Naive thymus-derived CD4-positive, alpha-beta T cell (primary cell): ENCODE measurements at regions of chr4 and their contacts with region 1.

Region 1: GRCh38 chr4:30815685-30816084 is 95.5 kb downstream of the PCDH7 start:
- DNase-seq: no peak
- ATAC-seq: no peak
- H3K4me3 ChIP-seq: no peak overlapping the region
- H3K4me3 Mint-ChIP-seq: no peak overlapping the region
- H3K27ac ChIP-seq: no peak overlapping the region
- H3K27ac Mint-ChIP-seq: no peak overlapping the region
- H3K4me1 ChIP-seq: no peaks in the 10 kb centered on the region
- H3K4me1 Mint-ChIP-seq: no peaks in the 10 kb centered on the region
- H3K27me3 ChIP-seq: no peaks in the 10 kb centered on the region
- H3K27me3 Mint-ChIP-seq: no peaks in the 10 kb centered on the region

Region 2: DNA sequence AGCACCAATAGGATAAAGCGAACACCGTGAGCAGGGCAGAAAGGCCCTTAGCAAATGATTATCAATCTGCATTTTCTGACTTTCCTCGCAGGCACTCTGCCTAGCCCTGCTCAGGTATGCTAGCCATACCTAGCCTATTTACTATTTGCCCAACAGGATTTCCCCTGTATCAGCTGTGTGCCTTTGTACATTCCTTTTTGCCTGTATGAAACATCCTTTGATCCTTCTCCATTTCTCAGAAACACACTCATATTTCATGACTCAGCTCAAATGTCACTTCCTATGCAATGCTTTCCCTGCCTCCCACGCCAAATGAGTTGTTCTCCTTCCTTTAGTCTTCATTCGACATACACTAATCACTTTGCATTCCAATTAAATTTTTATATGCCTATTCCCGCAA is 58.3 kb before region 1 on chr4:
- CTCF ChIA-PET with region 1: no interaction called
- POLR2A ChIA-PET with region 1: no interaction called
- intact Hi-C with region 1: loop called in 1 of 2 experiments (anchors 10 kb)
- DNase-seq: no peak
- ATAC-seq: no peak
- H3K4me3 ChIP-seq: no peak overlapping the region
- H3K4me3 Mint-ChIP-seq: no peak overlapping the region
- H3K27ac ChIP-seq: no peak overlapping the region
- H3K27ac Mint-ChIP-seq: no peak overlapping the region
- H3K4me1 ChIP-seq: no peaks in the 10 kb centered on the region
- H3K4me1 Mint-ChIP-seq: no peaks in the 10 kb centered on the region
- H3K27me3 ChIP-seq: no peaks in the 10 kb centered on the region
- H3K27me3 Mint-ChIP-seq: no peaks in the 10 kb centered on the region

Region 3: GRCh38 chr4:30839583-30840520 is 24.2 kb after region 1 on chr4:
- CTCF ChIA-PET with region 1: no interaction called
- POLR2A ChIA-PET with region 1: no interaction called
- intact Hi-C with region 1: no loop called
- DNase-seq: no peak
- ATAC-seq: no peak
- H3K4me3 ChIP-seq: no peak overlapping the region
- H3K4me3 Mint-ChIP-seq: no peak overlapping the region
- H3K27ac ChIP-seq: no peak overlapping the region
- H3K27ac Mint-ChIP-seq: no peak overlapping the region
- H3K4me1 ChIP-seq: no peaks in the 10 kb centered on the region
- H3K4me1 Mint-ChIP-seq: no peaks in the 10 kb centered on the region
- H3K27me3 ChIP-seq: no peaks in the 10 kb centered on the region
- H3K27me3 Mint-ChIP-seq: no peaks in the 10 kb centered on the region